Common myeloid progenitor, CD34-positive (primary cell): ENCODE measurements at regions of chr7 and their contacts with region 1.

Region 1: DNA sequence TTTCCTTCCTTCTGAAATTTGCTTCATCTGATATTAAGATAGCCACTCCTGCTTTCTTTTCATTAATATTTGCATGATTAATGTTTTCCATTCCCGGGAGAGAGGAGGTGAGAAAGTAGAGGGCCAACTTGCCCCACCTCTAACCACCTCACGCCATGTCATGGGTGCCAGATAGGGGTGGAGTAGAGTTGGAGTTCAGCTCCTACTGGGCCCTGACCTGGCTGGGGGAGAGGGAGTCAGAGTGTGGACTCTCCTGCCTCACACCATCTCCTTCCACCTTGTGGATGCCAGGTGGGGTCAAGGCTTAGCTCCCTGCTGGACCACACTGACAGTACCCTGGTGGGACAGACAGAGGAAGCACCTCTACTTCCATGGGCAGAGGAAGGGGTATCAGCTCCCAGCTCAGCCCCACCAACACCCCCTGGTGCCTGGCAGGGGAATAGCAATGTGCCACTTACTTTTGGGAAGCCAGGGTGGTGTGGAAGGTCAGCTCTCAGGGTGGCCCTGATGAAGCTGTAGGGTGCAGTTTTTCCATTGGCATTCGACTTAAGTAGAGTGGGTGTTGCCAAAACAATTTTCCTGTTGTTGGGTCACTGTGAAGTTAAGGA is 28.0 kb downstream of the CHST12 start:
- DNase-seq: peak; percentile 31 to 57 (median 51)
- H3K4me3 ChIP-seq: no peak overlapping the region
- H3K27ac ChIP-seq: no peak overlapping the region
- H3K4me1 ChIP-seq: no peaks in the 10 kb centered on the region
- H3K27me3 ChIP-seq: no peaks in the 10 kb centered on the region

Region 2: DNA sequence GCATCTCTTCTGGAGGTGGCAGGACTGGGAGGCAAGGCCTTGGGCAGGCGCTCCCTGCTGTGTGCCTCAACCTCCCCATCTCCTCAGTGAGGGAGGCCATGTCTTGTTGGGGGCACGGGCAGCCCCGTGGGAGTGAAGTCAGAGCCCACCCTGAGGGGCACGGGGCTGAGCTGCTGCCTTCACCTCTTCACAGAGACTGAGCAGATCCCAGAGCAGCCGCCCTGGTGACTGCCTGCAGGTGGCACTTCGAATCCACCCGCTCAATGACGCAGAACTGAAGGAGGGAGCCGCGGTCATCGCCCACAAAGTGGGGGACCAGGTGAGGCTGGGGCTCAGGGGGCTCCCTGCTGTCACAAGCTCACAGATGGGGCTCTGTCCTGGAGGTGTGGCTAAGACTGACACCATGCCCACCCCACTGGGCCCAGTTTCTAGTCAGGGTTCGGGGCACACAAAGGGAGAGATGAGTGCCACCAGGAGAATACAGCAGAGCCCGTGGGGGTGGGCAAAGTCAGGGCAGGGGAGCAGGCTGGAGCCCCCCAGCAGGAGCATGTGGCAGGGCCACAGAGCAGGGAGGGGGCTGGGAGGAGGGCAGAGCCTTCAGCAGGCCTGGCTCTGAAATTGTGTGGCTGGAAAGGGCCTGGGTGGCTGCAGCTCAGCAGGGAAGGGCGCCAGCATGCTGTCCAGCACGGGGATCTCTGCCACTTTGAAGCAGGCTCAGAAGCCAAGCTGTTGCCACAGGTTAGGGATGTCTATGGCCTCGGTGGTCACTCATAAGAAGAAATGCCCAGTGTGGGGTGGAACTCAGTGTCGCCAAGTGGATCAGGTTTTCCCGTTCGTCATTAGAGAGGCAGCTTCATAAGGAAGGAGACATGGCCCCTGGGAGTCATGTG is 46.8 kb before region 1 on chr7:
- CTCF ChIA-PET with region 1: interaction called, 26 read pairs
- POLR2A ChIA-PET with region 1: no interaction called
- DNase-seq: peak in 2 of 3 donors; percentile 41 to 48
- H3K4me3 ChIP-seq: no peak overlapping the region
- H3K27ac ChIP-seq: no peak overlapping the region
- H3K4me1 ChIP-seq: peaks cover 0 to 19% (median 9%) of the 10 kb centered on the region in 4 experiments
- H3K27me3 ChIP-seq: no peaks in the 10 kb centered on the region

Region 3: DNA sequence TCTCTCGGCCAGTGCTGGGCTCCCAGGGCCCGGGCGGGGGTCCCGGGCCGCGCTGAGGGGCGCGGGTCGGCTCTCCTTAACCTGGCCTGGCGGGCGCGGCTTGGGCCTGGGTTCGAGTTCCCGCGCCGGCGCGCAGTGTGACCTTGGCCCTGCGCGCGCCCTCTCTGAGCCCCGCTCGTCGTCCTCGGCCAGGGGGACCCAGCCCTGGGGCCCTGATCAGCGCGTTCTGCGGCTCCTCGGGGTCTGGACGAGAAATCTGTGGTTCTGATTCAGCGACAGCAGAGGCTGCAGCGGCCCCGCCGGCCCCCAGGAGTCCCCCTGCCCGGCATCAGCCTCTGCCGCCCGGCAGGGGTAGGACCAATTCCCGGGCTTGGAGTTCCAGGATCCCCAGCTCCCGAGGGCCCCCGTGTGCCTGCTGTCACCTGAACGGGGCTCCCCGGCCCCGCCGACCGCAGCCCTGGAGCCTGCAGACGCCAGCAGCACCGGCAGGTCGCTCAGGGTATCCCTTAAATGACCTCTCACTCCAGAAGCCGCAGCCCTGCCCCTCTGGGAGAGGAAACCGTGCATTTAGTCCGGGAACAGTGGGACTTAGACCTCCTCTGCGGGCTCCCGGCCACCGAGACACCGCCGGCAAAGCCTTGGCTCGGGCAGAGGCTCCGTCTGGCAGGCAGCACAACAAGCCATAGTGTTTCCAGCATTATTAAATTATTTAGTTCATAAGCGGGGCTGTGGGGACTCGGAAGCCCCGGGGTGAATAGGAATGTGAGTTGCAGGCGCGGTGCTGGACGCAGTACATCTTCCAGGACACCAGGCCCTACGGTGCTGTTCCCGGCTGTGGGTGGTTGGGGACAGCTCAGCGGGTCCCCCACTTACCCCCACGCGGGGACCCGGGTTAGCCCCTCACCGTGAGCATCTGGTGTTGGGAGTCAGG is 27.4 kb before region 1 on chr7:
- CTCF ChIA-PET with region 1: interaction called, 21 read pairs
- POLR2A ChIA-PET with region 1: interaction called, 7 read pairs
- DNase-seq: peak in 1 of 3 donors; percentile 42
- H3K4me3 ChIP-seq: peak overlapping the region; percentile 61 to 96 (median 90)
- H3K27ac ChIP-seq: peak overlapping the region; percentile 54 to 86
- H3K4me1 ChIP-seq: peaks cover 11 to 86% (median 74%) of the 10 kb centered on the region in 4 experiments
- H3K27me3 ChIP-seq: no peaks in the 10 kb centered on the region

Region 4: DNA sequence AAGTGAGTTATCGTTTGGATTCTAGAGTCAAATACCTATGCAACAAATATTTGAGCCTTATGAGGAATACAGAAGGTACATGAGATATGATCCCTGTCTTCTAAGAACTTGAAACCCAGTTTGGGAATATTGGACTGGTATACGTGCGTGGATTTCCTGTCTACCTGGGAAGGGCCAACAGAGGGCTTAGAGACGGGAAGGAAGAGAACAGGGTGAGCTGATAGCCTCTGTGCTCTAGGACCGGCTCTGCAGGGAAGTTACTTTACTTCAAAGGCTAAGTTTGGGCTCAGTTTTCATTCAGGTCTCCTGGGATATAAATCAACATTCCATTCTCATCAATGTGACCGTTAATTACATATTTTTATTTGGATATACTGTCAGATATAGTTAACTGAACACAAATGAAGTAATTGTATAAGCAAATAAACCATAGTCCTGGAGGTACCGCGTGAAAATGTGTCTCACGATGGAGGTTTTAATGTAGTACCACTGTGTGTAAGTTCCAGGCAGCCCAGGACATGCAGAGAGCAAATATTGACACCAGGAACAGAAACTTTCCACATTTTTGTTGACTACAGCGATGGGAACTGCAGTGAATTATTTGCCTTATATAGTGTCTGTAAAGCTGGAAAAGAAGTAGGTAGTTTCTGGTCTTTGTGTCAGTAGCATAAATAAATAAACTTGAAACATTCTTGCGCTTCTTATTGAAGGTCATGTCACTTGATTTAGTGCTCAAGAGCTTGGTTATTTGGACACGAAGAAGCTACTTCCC is 19.4 kb before region 1 on chr7:
- CTCF ChIA-PET with region 1: interaction called, 21 read pairs
- POLR2A ChIA-PET with region 1: interaction called, 4 read pairs
- DNase-seq: no peak
- H3K4me3 ChIP-seq: peak overlapping the region in 2 of 7 experiments; percentile 33 to 52
- H3K27ac ChIP-seq: no peak overlapping the region
- H3K4me1 ChIP-seq: peaks cover 28 to 92% (median 75%) of the 10 kb centered on the region in 4 experiments
- H3K27me3 ChIP-seq: no peaks in the 10 kb centered on the region

Region 5: GRCh38 chr7:2417981-2418481 is 13.3 kb before region 1 on chr7:
- CTCF ChIA-PET with region 1: interaction called, 18 read pairs
- POLR2A ChIA-PET with region 1: interaction called, 4 read pairs
- DNase-seq: peak in 2 of 3 donors; percentile 82 to 86
- H3K4me3 ChIP-seq: no peak overlapping the region
- H3K27ac ChIP-seq: no peak overlapping the region
- H3K4me1 ChIP-seq: peaks cover 10 to 55% (median 31%) of the 10 kb centered on the region in 4 experiments
- H3K27me3 ChIP-seq: no peaks in the 10 kb centered on the region

Region 6: DNA sequence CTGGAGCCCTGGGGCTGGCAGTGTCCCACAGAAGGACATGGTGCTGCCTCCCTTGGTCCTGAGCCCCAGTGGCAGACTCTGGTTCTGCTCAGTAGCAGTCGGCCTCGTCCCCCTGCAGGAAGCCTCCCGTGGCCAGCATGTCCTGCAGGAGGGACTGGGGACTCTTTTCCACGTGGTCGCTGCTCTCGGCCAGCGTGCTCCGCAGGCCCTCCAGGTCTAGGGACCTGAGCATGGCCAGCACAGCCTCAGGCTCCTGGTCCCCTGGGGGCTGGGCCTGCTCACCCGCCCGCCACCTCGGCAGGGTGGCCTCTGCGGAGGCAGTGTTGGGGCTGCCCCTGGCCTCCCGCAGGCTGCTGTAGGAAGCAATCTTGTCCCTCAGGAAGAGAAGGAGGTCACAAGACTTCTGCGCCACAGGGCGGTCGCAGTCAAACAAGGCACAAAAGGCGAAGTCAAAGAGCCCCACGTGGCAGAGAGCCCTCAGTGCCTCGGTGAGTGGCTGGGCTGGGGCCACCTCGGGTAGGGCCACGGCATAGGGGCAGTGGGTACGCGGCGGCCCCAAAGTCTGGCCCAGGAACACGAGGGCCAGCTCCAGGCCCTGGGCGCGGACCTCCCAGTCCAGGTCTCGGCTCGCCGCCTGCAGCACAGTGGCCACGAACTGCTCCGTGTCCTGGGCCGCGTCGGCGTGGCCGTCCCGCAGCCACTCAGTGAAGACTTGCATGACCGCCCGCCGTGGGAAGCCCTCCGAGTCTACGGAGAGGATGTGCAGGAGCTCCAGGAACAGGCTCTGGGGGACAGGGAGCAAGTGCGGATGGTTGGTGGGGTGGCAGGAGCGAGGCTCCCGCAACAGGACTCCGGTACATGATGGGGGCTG is 106.9 kb after region 1 on chr7:
- CTCF ChIA-PET with region 1: no interaction called
- POLR2A ChIA-PET with region 1: no interaction called
- DNase-seq: no peak
- H3K4me3 ChIP-seq: no peak overlapping the region
- H3K27ac ChIP-seq: no peak overlapping the region
- H3K4me1 ChIP-seq: no peaks in the 10 kb centered on the region
- H3K27me3 ChIP-seq: no peaks in the 10 kb centered on the region